Naive thymus-derived CD4-positive, alpha-beta T cell (primary cell): ENCODE measurements at regions of chr11 and their contacts with region 1.

Region 1: GRCh38 chr11:72413914-72414628 is 20.3 kb downstream of the CLPB start:
- DNase-seq: peak; percentile 49 to 79 (median 68)
- ATAC-seq: peak; percentile 79
- H3K4me3 ChIP-seq: no peak overlapping the region
- H3K4me3 Mint-ChIP-seq: no peak overlapping the region
- H3K27ac ChIP-seq: no peak overlapping the region
- H3K27ac Mint-ChIP-seq: peak overlapping the region in 4 of 9 donors; percentile 2 to 50 (median 22)
- H3K4me1 ChIP-seq: peaks cover 0 to 2% of the 10 kb centered on the region in 2 donors
- H3K4me1 Mint-ChIP-seq: peaks cover 17 to 48% (median 39%) of the 10 kb centered on the region in 7 donors
- H3K27me3 ChIP-seq: no peaks in the 10 kb centered on the region
- H3K27me3 Mint-ChIP-seq: no peaks in the 10 kb centered on the region

Region 2: GRCh38 chr11:72293910-72294615 is 120.0 kb before region 1 on chr11:
- CTCF ChIA-PET with region 1: no interaction called
- POLR2A ChIA-PET with region 1: no interaction called
- intact Hi-C with region 1: loop called in 1 of 2 experiments (anchors 5 kb)
- DNase-seq: no peak
- ATAC-seq: no peak
- H3K4me3 ChIP-seq: no peak overlapping the region
- H3K4me3 Mint-ChIP-seq: no peak overlapping the region
- H3K27ac ChIP-seq: no peak overlapping the region
- H3K27ac Mint-ChIP-seq: no peak overlapping the region
- H3K4me1 ChIP-seq: no peaks in the 10 kb centered on the region
- H3K4me1 Mint-ChIP-seq: peaks cover 0 to 2% (median 0%) of the 10 kb centered on the region in 7 donors
- H3K27me3 ChIP-seq: no peaks in the 10 kb centered on the region
- H3K27me3 Mint-ChIP-seq: no peaks in the 10 kb centered on the region

Region 3: DNA sequence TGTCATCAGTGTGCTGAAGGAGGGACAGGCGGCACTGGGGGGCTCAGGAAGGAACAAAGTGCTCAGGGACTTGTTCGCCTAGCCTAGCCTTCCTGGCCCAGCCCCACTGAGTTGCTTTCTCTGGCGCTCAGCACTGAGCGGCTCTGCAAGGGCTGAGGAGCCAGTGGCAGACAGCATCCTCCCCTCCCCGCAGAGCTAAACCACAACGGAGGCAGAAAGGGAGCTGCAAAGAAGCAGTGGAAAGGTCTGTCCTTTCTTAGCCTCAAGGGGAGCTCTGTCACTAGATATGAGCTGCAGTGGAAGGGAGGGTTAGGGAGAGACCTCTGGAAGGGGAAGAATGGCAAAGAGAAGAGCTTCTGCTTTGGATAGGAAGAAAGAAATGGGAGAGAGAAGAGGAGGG is 80.4 kb before region 1 on chr11:
- CTCF ChIA-PET with region 1: no interaction called
- POLR2A ChIA-PET with region 1: no interaction called
- intact Hi-C with region 1: loop called in 1 of 2 experiments (anchors 1 kb)
- DNase-seq: peak in 8 of 9 donors; percentile 50 to 69 (median 58)
- ATAC-seq: peak; percentile 83
- H3K4me3 ChIP-seq: no peak overlapping the region
- H3K4me3 Mint-ChIP-seq: peak overlapping the region in 6 of 10 donors; percentile 0 to 69 (median 42)
- H3K27ac ChIP-seq: no peak overlapping the region
- H3K27ac Mint-ChIP-seq: peak overlapping the region in 7 of 9 donors; percentile 1 to 89 (median 26)
- H3K4me1 ChIP-seq: peaks cover 0 to 7% of the 10 kb centered on the region in 2 donors
- H3K4me1 Mint-ChIP-seq: peaks cover 15 to 42% (median 30%) of the 10 kb centered on the region in 7 donors
- H3K27me3 ChIP-seq: no peaks in the 10 kb centered on the region
- H3K27me3 Mint-ChIP-seq: no peaks in the 10 kb centered on the region

Region 4: DNA sequence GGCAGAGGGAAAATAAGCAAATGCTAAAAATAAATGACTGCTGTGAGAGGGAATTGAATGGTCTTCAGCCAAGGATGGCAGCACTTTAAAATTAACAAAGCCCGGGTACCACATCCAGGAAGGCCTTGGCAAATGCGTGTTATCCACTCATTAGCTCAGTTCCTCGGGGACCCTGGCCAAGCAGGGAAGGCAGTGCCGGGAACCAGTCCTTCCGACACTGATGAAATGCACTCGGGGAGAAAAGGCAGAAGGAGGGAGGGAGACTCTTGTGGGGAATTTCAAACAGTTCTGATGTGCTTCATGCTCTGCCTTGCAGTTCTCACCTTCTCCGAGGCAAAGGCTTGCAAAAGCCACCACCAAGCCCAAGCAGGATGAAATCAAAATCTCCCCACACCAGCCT is 18.0 kb before region 1 on chr11:
- CTCF ChIA-PET with region 1: no interaction called
- POLR2A ChIA-PET with region 1: no interaction called
- intact Hi-C with region 1: no loop called
- DNase-seq: no peak
- ATAC-seq: no peak
- H3K4me3 ChIP-seq: no peak overlapping the region
- H3K4me3 Mint-ChIP-seq: no peak overlapping the region
- H3K27ac ChIP-seq: no peak overlapping the region
- H3K27ac Mint-ChIP-seq: no peak overlapping the region
- H3K4me1 ChIP-seq: no peaks in the 10 kb centered on the region
- H3K4me1 Mint-ChIP-seq: peaks cover 0 to 5% (median 0%) of the 10 kb centered on the region in 7 donors
- H3K27me3 ChIP-seq: no peaks in the 10 kb centered on the region
- H3K27me3 Mint-ChIP-seq: no peaks in the 10 kb centered on the region

Region 5: GRCh38 chr11:72425053-72425980 is 11.2 kb after region 1 on chr11:
- CTCF ChIA-PET with region 1: interaction called, 23 read pairs
- POLR2A ChIA-PET with region 1: no interaction called
- intact Hi-C with region 1: no loop called
- DNase-seq: no peak
- ATAC-seq: peak; percentile 59
- H3K4me3 ChIP-seq: no peak overlapping the region
- H3K4me3 Mint-ChIP-seq: peak overlapping the region in 1 of 10 donors; percentile 15
- H3K27ac ChIP-seq: no peak overlapping the region
- H3K27ac Mint-ChIP-seq: peak overlapping the region in 4 of 9 donors; percentile 1 to 41 (median 24)
- H3K4me1 ChIP-seq: peaks cover 0 to 10% of the 10 kb centered on the region in 2 donors
- H3K4me1 Mint-ChIP-seq: peaks cover 20 to 29% (median 25%) of the 10 kb centered on the region in 7 donors
- H3K27me3 ChIP-seq: no peaks in the 10 kb centered on the region
- H3K27me3 Mint-ChIP-seq: no peaks in the 10 kb centered on the region

Region 6: GRCh38 chr11:72446902-72447769 is 33.1 kb after region 1 on chr11:
- CTCF ChIA-PET with region 1: interaction called, 3 read pairs
- POLR2A ChIA-PET with region 1: no interaction called
- intact Hi-C with region 1: loop called in 1 of 2 experiments (anchors 2 kb)
- DNase-seq: peak in 7 of 9 donors; percentile 35 to 60 (median 49)
- ATAC-seq: peak; percentile 91
- H3K4me3 ChIP-seq: no peak overlapping the region
- H3K4me3 Mint-ChIP-seq: no peak overlapping the region
- H3K27ac ChIP-seq: no peak overlapping the region
- H3K27ac Mint-ChIP-seq: no peak overlapping the region
- H3K4me1 ChIP-seq: no peaks in the 10 kb centered on the region
- H3K4me1 Mint-ChIP-seq: peaks cover 0 to 2% (median 0%) of the 10 kb centered on the region in 7 donors
- H3K27me3 ChIP-seq: no peaks in the 10 kb centered on the region
- H3K27me3 Mint-ChIP-seq: peaks cover 4 to 44% (median 8%) of the 10 kb centered on the region in 5 donors

Region 7: GRCh38 chr11:72652873-72653630 is 239.0 kb after region 1 on chr11:
- CTCF ChIA-PET with region 1: no interaction called
- POLR2A ChIA-PET with region 1: no interaction called
- intact Hi-C with region 1: no loop called
- DNase-seq: no peak
- ATAC-seq: no peak
- H3K4me3 ChIP-seq: no peak overlapping the region
- H3K4me3 Mint-ChIP-seq: no peak overlapping the region
- H3K27ac ChIP-seq: no peak overlapping the region
- H3K27ac Mint-ChIP-seq: no peak overlapping the region
- H3K4me1 ChIP-seq: no peaks in the 10 kb centered on the region
- H3K4me1 Mint-ChIP-seq: no peaks in the 10 kb centered on the region
- H3K27me3 ChIP-seq: no peaks in the 10 kb centered on the region
- H3K27me3 Mint-ChIP-seq: peaks cover 0 to 8% (median 0%) of the 10 kb centered on the region in 5 donors